GM12878 (cell line): ENCODE measurements at regions of chr1 and their contacts with region 1.

Region 1: GRCh38 chr1:41812051-41812450 is 106.7 kb downstream of the HIVEP3 start:
- DNase-seq: no peak
- ATAC-seq: peak; percentile 70
- H3K4me3 ChIP-seq: no peak overlapping the region
- H3K27ac ChIP-seq: no peak overlapping the region
- H3K4me1 ChIP-seq: peaks cover 43% of the 10 kb centered on the region
- H3K27me3 ChIP-seq: no peaks in the 10 kb centered on the region
- CTCF ChIP-seq: peak; percentile 67 to 72 (median 70)
- EP300 ChIP-seq: no peak
- POLR2A ChIP-seq: no peak
- RAD21 ChIP-seq: peak; percentile 77

Region 2: DNA sequence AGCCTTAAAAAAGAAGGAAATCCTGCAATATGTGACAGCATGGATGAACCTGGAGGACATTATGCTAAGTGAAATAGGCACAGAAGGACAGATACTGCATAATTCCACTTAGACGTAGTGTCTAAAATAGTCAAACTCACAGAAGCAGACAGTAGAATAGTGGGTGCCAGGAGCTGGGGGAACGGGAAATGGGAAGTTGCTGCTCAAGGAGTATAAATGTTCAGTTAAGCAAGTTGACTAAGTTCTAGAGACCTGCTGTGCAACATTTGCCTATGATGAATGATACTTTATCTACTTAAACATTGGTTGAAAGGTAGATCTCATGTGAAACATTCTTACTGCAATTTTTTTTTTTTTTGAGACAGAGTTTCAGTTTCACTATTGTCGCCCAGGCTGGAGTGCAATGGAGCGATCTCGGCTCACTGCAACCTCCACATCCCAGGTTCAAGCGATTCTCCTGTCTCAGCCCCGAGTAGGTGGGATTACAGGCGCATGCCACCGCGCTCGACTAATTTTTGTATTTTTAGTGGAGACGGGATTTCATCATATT is 91.1 kb before region 1 on chr1:
- CTCF ChIA-PET with region 1: interaction called, 5 read pairs
- POLR2A ChIA-PET with region 1: no interaction called
- RAD21 ChIA-PET with region 1: interaction called, 61 read pairs
- SMC1A ChIA-PET with region 1: no interaction called
- in situ Hi-C with region 1: no loop called
- intact Hi-C with region 1: loop called (anchors 2 kb)
- DNase-seq: no peak
- ATAC-seq: peak; percentile 80
- H3K4me3 ChIP-seq: no peak overlapping the region
- H3K27ac ChIP-seq: peak overlapping the region; percentile 21; the same call in 1 of the 2 replicates
- H3K4me1 ChIP-seq: peaks cover 69% of the 10 kb centered on the region
- H3K27me3 ChIP-seq: no peaks in the 10 kb centered on the region
- CTCF ChIP-seq: no peak
- EP300 ChIP-seq: no peak
- POLR2A ChIP-seq: no peak
- RAD21 ChIP-seq: no peak

Region 3: GRCh38 chr1:41862384-41863174 is 50.5 kb after region 1 on chr1:
- CTCF ChIA-PET with region 1: interaction called, 24 read pairs
- POLR2A ChIA-PET with region 1: interaction called, 4 read pairs
- RAD21 ChIA-PET with region 1: interaction called, 32 read pairs
- SMC1A ChIA-PET with region 1: interaction called, 27 read pairs
- in situ Hi-C with region 1: no loop called
- intact Hi-C with region 1: no loop called
- DNase-seq: no peak
- ATAC-seq: no peak
- H3K4me3 ChIP-seq: no peak overlapping the region
- H3K27ac ChIP-seq: no peak overlapping the region
- H3K4me1 ChIP-seq: peaks cover 9% of the 10 kb centered on the region
- H3K27me3 ChIP-seq: no peaks in the 10 kb centered on the region; a peak in 1 of 4 replicates
- CTCF ChIP-seq: no peak
- EP300 ChIP-seq: no peak
- POLR2A ChIP-seq: no peak
- RAD21 ChIP-seq: no peak

Region 4: GRCh38 chr1:41891199-41891896 is 79.3 kb after region 1 on chr1:
- CTCF ChIA-PET with region 1: interaction called, 17 read pairs
- POLR2A ChIA-PET with region 1: no interaction called
- RAD21 ChIA-PET with region 1: interaction called, 22 read pairs
- SMC1A ChIA-PET with region 1: interaction called, 14 read pairs
- in situ Hi-C with region 1: no loop called
- intact Hi-C with region 1: no loop called
- DNase-seq: peak; percentile 68
- ATAC-seq: peak; percentile 98
- H3K4me3 ChIP-seq: peak overlapping the region; percentile 66
- H3K27ac ChIP-seq: peak overlapping the region; percentile 75
- H3K4me1 ChIP-seq: peaks cover 15% of the 10 kb centered on the region
- H3K27me3 ChIP-seq: no peaks in the 10 kb centered on the region
- CTCF ChIP-seq: peak; percentile 39 to 42 (median 41); a peak in 5 of 6 replicates
- EP300 ChIP-seq: peak; percentile 4 to 26; a peak in 1 of 4 replicates
- POLR2A ChIP-seq: peak; percentile 73
- RAD21 ChIP-seq: peak; percentile 72

Region 5: DNA sequence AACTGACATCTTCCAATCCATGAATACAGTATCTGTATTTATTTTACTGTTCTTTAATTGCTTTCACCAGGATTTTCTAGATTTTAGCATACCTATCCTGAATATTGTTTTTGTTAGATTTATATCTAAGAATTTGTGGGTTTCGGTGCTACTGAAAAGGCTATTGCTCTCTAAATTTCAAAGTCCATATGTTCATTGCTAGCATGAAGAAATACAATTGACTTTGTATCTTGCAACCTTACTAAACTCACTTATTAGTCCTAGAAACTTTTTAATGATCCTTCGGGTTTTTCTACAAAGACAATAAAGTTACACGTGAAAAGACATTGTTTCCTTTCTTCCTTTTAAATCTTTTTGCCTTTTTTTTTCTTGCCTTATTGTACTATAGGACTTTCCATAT is 119.5 kb after region 1 on chr1:
- CTCF ChIA-PET with region 1: no interaction called
- POLR2A ChIA-PET with region 1: no interaction called
- RAD21 ChIA-PET with region 1: no interaction called
- SMC1A ChIA-PET with region 1: no interaction called
- in situ Hi-C with region 1: no loop called
- intact Hi-C with region 1: no loop called
- DNase-seq: no peak
- ATAC-seq: no peak
- H3K4me3 ChIP-seq: no peak overlapping the region
- H3K27ac ChIP-seq: no peak overlapping the region
- H3K4me1 ChIP-seq: no peaks in the 10 kb centered on the region
- H3K27me3 ChIP-seq: no peaks in the 10 kb centered on the region
- CTCF ChIP-seq: no peak
- EP300 ChIP-seq: no peak
- POLR2A ChIP-seq: no peak
- RAD21 ChIP-seq: no peak

Region 6: DNA sequence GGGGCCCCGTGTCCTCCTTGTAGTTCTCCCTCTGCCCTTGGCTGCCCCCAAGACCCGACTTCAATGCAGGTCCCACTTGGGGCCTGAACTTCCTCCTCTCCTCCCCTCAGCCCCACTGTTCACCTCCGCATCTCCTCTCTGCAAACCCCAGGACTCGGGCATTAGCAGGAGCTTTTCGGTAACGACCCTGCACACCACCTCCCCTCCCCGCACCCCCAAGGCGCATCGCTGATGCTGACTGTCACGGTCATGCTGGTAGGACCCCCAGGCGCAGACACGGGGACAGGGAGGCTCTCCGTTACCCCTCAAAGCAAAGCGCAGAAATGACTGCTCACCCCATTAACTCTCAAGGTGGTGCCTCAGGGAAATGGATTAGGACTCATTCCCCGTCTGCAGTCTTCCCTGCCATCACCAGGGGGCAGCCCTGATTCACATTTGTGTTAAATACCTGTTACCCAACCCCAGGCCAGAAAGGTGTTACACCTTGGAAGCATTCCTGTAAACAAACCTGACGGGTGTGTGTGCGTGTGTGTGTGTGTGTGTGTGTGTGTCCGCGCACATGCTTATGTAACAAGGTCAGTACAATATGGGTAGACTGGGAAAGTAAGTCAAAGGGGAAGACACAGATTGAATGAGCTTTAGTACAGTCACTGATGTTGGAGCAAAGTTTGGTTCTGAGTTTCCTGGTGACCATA is 334.7 kb after region 1 on chr1:
- CTCF ChIA-PET with region 1: no interaction called
- POLR2A ChIA-PET with region 1: no interaction called
- RAD21 ChIA-PET with region 1: no interaction called
- SMC1A ChIA-PET with region 1: interaction called, 6 read pairs
- in situ Hi-C with region 1: no loop called
- intact Hi-C with region 1: loop called (anchors 10 kb)
- DNase-seq: no peak
- ATAC-seq: peak; percentile 93
- H3K4me3 ChIP-seq: no peak overlapping the region
- H3K27ac ChIP-seq: no peak overlapping the region
- H3K4me1 ChIP-seq: no peaks in the 10 kb centered on the region
- H3K27me3 ChIP-seq: no peaks in the 10 kb centered on the region
- CTCF ChIP-seq: peak; percentile 84 to 87 (median 85)
- EP300 ChIP-seq: no peak
- POLR2A ChIP-seq: no peak
- RAD21 ChIP-seq: peak; percentile 89